ENCODE measurements at regions of chr5 and their contacts with region 1.

Region 1: DNA sequence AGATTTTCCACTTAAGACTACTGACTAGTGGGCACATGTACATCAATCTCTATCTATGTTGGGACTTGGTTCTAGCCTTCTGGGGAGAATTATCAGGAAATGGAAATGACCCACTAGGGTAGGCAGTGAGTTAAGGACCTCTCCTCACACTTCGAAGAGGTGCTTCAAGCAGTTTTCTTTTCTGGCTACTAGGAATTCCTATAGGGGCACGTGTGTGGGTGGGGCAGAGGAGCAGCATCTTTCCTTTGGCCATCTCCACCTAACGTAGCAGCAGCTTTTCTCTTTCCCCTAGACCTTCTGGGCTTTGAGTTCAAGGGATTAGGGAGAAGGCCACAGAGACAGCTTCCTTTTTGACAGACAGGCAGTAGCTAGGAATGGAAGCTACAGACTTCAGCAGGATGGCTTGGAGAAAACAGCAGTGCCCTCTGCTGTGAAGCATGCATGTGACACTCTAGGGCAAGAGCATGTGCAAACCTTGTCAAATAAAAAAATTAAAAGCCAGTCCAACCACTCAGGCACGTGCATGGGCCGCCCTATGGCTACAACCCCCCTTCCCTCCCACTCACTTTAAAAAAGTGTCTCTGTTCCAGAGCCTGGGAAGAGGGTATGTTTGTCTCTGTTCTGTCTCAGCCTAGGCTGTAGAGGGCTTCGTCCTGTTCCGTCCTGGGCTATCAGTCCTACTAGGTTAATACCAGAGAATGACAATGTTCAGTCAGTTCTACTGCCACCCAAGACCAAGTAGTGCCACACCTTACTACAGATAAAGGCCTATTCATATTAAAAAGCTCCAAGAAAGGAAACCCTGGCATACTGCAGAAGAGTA is 8.7 kb upstream of the GFRA3 start:
- DNase-seq: peak; percentile 69

Region 2: DNA sequence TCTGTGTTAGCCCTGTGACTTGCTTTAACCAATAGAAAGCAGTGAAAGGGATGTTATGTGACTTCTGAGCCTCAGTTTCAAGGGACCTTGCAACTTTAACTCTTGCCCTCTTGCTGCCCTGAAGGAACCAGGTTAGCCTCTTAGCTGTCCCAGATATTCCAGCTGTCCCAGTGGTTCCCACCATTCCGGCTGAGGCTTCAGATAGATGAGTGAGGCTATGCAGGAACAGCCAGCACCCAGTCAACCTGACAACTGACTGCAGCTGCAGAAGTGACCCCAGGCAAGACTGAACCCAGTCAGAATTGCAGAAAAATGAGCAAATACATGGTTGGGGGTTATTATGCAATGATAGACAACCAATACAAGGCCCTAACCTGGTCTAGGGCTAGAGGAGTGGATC is 59.6 kb before region 1 on chr5:
- CTCF ChIA-PET with region 1: interaction called, 27 read pairs
- POLR2A ChIA-PET with region 1: no interaction called
- DNase-seq: no peak

Region 3: GRCh38 chr5:138241688-138242571 is 41.2 kb before region 1 on chr5:
- CTCF ChIA-PET with region 1: no interaction called
- POLR2A ChIA-PET with region 1: no interaction called
- DNase-seq: no peak

Region 4: DNA sequence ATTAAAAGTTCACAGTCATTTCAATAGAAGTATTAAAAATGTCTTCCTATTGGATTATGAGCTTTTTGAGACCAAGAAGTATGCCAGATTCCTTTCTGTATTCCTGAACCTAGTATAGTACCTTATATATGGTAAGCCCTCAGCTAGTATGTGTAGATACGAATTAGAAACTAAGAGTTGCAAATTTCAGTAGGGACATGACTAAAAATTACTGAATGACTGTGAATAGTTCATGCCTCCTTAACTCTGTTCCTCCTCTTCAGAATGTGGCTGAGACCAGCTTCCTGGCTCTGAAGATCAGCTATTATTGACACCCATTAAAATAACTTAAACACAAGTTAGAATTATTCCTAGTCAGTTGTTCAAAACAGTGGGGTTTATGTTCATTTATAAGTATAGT is 89.1 kb after region 1 on chr5:
- CTCF ChIA-PET with region 1: no interaction called
- POLR2A ChIA-PET with region 1: no interaction called
- DNase-seq: no peak